CD4-positive, alpha-beta T cell (primary cell): ENCODE measurements at regions of chr17 and their contacts with region 1.

Region 1: GRCh38 chr17:73719588-73720071 is 75.4 kb upstream of the SDK2 start:
- DNase-seq: no peak
- ATAC-seq: no peak
- H3K4me3 ChIP-seq: no peak overlapping the region
- H3K4me3 Mint-ChIP-seq: peak overlapping the region; percentile 46
- H3K27ac ChIP-seq: peak overlapping the region in 1 of 2 donors; percentile 40
- H3K27ac Mint-ChIP-seq: peak overlapping the region; percentile 97
- H3K4me1 ChIP-seq: peaks cover 41% of the 10 kb centered on the region
- H3K4me1 Mint-ChIP-seq: peaks cover 60% of the 10 kb centered on the region
- H3K27me3 ChIP-seq: no peaks in the 10 kb centered on the region
- H3K27me3 Mint-ChIP-seq: no peaks in the 10 kb centered on the region
- CTCF ChIP-seq: no peak

Region 2: DNA sequence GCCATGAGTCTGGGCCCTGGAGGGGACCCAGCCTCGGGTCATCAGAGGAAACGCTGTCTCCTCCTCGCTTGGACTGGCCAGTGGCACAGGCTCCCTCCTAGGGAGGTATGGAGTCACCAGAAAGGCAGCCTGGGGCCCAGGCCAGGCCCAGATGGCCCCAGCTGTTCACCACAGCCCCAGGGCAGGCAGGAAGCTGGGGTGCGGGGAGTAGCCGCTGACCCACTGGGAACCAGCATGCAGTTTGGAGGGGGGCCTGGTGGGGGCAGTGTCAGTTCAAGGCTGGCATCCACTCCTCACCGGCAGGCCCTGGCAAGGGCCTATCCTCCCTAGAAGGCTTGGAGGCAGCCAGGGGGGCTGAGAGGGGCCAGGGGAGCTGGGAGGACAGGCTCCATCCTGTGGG is 124.2 kb before region 1 on chr17:
- CTCF ChIA-PET with region 1: no interaction called
- POLR2A ChIA-PET with region 1: interaction called, 12 read pairs
- intact Hi-C with region 1: loop called in 1 of 2 experiments (anchors 5 kb)
- DNase-seq: peak in 8 of 14 experiments; percentile 12 to 30 (median 25)
- ATAC-seq: no peak
- H3K4me3 ChIP-seq: no peak overlapping the region
- H3K4me3 Mint-ChIP-seq: no peak overlapping the region
- H3K27ac ChIP-seq: peak overlapping the region in 1 of 2 donors; percentile 10
- H3K27ac Mint-ChIP-seq: peak overlapping the region; percentile 90
- H3K4me1 ChIP-seq: peaks cover 61% of the 10 kb centered on the region
- H3K4me1 Mint-ChIP-seq: peaks cover 67% of the 10 kb centered on the region
- H3K27me3 ChIP-seq: no peaks in the 10 kb centered on the region
- H3K27me3 Mint-ChIP-seq: no peaks in the 10 kb centered on the region
- CTCF ChIP-seq: peak; percentile 24

Region 3: GRCh38 chr17:73695035-73695738 is 24.4 kb before region 1 on chr17:
- CTCF ChIA-PET with region 1: no interaction called
- POLR2A ChIA-PET with region 1: no interaction called
- intact Hi-C with region 1: no loop called
- DNase-seq: no peak
- ATAC-seq: no peak
- H3K4me3 ChIP-seq: no peak overlapping the region
- H3K4me3 Mint-ChIP-seq: no peak overlapping the region
- H3K27ac ChIP-seq: no peak overlapping the region
- H3K27ac Mint-ChIP-seq: no peak overlapping the region
- H3K4me1 ChIP-seq: no peaks in the 10 kb centered on the region
- H3K4me1 Mint-ChIP-seq: no peaks in the 10 kb centered on the region
- H3K27me3 ChIP-seq: no peaks in the 10 kb centered on the region
- H3K27me3 Mint-ChIP-seq: no peaks in the 10 kb centered on the region
- CTCF ChIP-seq: no peak

Region 4: DNA sequence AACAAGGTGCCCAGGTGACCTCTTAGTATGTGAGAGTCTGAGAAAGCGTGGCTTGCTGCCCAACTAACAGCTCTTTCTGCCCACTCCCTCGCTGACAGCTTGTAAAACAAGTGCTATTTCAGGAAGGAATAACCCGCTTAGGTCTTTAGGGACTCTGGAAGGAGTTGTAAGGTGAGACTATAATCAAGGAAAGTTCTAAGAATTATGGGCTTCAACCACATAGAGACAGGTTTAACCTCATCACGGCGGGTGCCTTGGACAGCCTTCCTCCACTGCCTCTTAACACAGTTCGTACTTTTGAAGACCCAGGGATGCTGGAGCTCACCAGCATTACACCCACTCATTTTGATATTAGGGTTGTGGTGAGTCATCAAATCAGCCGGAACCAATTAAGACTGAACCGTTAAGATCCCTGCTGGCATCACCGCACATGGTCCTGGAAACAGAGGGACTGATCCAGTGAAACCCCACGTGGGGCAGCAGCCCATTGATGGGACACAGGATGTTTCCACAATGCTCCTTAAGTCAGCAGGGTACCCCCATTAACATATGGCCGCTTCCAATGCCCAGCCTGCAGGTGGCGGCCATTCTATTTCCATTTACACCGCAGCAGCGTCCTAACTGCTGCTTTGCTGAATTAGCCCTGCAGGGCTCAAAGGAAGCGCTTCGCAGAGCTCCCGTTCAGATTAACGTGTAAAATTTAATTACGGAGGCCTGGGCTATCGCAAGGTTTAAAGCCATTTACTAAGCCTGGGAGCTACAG is 101.2 kb after region 1 on chr17:
- CTCF ChIA-PET with region 1: no interaction called
- POLR2A ChIA-PET with region 1: interaction called, 9 read pairs
- intact Hi-C with region 1: loop called in 1 of 2 experiments (anchors 5 kb)
- DNase-seq: no peak
- ATAC-seq: no peak
- H3K4me3 ChIP-seq: no peak overlapping the region
- H3K4me3 Mint-ChIP-seq: no peak overlapping the region
- H3K27ac ChIP-seq: no peak overlapping the region
- H3K27ac Mint-ChIP-seq: no peak overlapping the region
- H3K4me1 ChIP-seq: peaks cover 32% of the 10 kb centered on the region
- H3K4me1 Mint-ChIP-seq: peaks cover 47% of the 10 kb centered on the region
- H3K27me3 ChIP-seq: no peaks in the 10 kb centered on the region
- H3K27me3 Mint-ChIP-seq: no peaks in the 10 kb centered on the region
- CTCF ChIP-seq: no peak

Region 5: DNA sequence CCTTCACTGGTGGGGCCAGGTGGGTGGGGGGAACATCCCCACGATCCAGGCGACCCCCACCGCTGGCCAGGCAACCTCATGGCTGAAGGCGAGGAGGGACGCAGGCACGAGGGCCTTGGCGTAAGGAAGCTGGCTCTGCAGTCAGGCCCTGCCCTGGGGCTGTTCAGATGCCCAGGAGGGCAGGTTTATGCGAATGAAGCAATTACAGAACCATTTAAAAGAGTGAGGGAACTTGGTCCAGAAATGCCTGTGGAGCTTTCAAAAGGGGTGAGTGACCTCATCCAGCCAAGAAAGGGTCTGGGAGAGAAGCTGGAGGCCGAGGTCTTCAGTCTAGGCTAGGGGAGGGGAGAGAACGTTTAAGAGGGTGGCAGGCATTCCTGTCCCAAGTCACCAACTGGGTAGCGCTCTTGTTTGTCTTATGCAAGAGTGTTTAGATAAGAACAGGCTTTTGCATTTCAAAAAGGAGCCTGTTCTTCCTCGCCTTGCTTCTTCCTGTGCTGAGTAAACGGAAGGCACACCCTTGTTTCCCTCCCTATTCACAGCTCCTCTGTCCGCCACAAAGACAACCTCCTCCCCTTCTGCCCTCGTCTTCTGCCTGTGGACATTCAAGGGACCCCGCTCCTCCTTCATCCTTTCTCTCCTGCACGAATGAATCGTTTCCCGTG is 108.1 kb after region 1 on chr17:
- CTCF ChIA-PET with region 1: no interaction called
- POLR2A ChIA-PET with region 1: interaction called, 20 read pairs
- intact Hi-C with region 1: loop called in 1 of 2 experiments (anchors 5 kb)
- DNase-seq: peak in 12 of 14 experiments; percentile 6 to 49 (median 19)
- ATAC-seq: peak; percentile 86
- H3K4me3 ChIP-seq: peak overlapping the region; percentile 8
- H3K4me3 Mint-ChIP-seq: peak overlapping the region; percentile 77
- H3K27ac ChIP-seq: peak overlapping the region; percentile 48 to 83
- H3K27ac Mint-ChIP-seq: peak overlapping the region; percentile 97
- H3K4me1 ChIP-seq: peaks cover 85% of the 10 kb centered on the region
- H3K4me1 Mint-ChIP-seq: peaks cover 95% of the 10 kb centered on the region
- H3K27me3 ChIP-seq: no peaks in the 10 kb centered on the region
- H3K27me3 Mint-ChIP-seq: no peaks in the 10 kb centered on the region
- CTCF ChIP-seq: no peak